ENCODE measurements at regions of chr4 and their contacts with region 1.

Region 1: GRCh38 chr4:39118034-39118658 is 56.1 kb downstream of the KLHL5 start:
- DNase-seq: no peak
- ATAC-seq: no peak
- H3K4me3 ChIP-seq: no peak overlapping the region
- H3K27ac ChIP-seq: no peak overlapping the region
- H3K4me1 ChIP-seq: peaks cover 11% of the 10 kb centered on the region
- H3K27me3 ChIP-seq: no peaks in the 10 kb centered on the region
- CTCF ChIP-seq: no peak
- POLR2A ChIP-seq: no peak
- RAD21 ChIP-seq: no peak

Region 2: DNA sequence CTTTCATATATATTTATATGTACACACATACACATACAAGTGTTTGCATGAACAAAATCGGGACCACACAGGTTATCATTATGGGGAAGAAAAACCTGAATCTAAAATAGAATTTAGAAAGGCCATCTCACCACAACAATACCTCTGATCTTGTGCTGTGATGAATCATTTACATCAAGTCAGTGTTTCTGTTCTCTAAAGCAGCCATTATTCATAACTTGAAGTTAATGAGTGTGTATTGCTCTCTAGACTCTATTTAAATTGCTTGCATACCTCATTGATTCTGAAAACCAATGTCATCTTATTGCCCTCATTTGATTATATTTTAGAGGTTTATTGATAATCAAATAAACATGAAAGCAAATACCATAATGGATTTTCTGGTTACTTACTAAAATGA is 179.0 kb before region 1 on chr4:
- CTCF ChIA-PET with region 1: no interaction called
- POLR2A ChIA-PET with region 1: no interaction called
- dilution Hi-C with region 1: no loop called
- in situ Hi-C with region 1: loop called (anchors 10 kb)
- intact Hi-C with region 1: no loop called
- DNase-seq: no peak
- ATAC-seq: no peak
- H3K4me3 ChIP-seq: no peak overlapping the region
- H3K27ac ChIP-seq: no peak overlapping the region
- H3K4me1 ChIP-seq: peaks cover 18% of the 10 kb centered on the region
- H3K27me3 ChIP-seq: no peaks in the 10 kb centered on the region
- CTCF ChIP-seq: no peak
- POLR2A ChIP-seq: no peak
- RAD21 ChIP-seq: no peak

Region 3: DNA sequence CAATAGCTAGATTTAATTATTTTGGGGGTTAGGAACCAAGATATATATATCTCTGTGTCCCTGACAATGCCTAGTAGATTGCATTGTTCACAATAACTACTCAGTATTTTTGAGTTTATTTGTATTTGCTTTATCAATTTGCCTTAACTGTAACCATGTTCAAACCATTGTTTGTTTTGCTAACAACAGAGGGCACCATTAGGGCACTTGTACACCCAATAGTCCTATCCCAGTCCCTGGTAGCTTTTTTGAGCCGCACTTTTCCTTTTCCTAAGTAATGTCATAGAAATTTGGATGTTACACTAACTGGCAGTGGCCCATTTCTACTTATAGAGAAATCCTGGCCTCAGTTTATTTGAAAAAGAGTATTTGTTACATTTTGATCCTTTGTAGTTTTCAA is 56.7 kb before region 1 on chr4:
- CTCF ChIA-PET with region 1: no interaction called
- POLR2A ChIA-PET with region 1: no interaction called
- dilution Hi-C with region 1: no loop called
- in situ Hi-C with region 1: no loop called
- intact Hi-C with region 1: no loop called
- DNase-seq: no peak
- ATAC-seq: no peak
- H3K4me3 ChIP-seq: no peak overlapping the region
- H3K27ac ChIP-seq: no peak overlapping the region
- H3K4me1 ChIP-seq: peaks cover 6% of the 10 kb centered on the region
- H3K27me3 ChIP-seq: no peaks in the 10 kb centered on the region
- CTCF ChIP-seq: no peak
- POLR2A ChIP-seq: no peak
- RAD21 ChIP-seq: no peak

Region 4: GRCh38 chr4:39201963-39202362 is 83.8 kb after region 1 on chr4:
- CTCF ChIA-PET with region 1: no interaction called
- POLR2A ChIA-PET with region 1: no interaction called
- dilution Hi-C with region 1: no loop called
- in situ Hi-C with region 1: no loop called
- intact Hi-C with region 1: no loop called
- DNase-seq: no peak
- ATAC-seq: no peak
- H3K4me3 ChIP-seq: no peak overlapping the region
- H3K27ac ChIP-seq: no peak overlapping the region
- H3K4me1 ChIP-seq: no peaks in the 10 kb centered on the region
- H3K27me3 ChIP-seq: no peaks in the 10 kb centered on the region
- CTCF ChIP-seq: no peak
- POLR2A ChIP-seq: no peak
- RAD21 ChIP-seq: no peak

Measured in IMR-90 (cell line).